ENCODE measurements at regions of chr5 and their contacts with region 1.

Region 1: DNA sequence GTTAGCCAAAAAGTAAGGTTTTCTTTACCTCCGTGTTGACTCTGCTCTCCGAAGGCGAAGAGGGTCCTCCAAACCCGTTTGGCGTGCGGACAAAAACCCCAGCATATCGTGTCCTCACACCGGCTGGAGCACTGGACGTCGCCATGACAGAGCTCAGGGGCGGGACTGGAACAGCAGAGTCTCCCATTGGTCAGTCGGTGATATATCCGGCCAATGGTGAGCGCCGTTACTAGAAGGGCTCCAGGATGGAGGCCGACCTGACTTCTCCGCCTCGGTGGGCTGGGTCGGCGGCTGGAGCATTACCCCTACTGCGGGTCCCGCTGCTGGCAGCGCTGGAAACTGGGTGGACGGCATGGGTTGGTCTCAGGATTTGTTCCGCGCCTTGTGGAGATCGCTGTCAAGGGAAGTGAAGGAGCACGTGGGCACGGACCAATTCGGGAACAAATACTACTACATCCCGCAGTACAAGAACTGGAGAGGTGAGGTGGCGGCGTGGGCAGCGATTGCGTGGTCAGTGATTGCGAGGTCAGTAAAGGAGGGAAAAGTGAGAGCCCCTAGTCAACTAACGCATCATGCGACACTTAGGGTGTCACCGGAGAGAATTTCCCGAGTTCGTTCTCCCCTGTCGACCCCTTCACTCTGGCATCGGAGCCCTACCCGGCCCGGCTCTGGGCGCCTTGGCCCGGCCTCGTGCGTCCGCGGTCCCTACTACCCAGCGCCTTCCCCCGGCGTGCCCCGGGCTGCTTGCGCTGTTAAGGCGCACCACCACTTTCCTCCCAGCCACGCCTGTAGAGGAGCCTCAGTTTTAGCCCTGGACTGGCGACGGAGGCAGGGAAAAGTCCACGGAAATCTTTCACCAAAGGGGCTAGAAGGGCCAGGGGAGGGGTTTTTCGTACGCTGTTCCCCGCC is at the starts of genes ERCC8 and NDUFAF2:
- DNase-seq: peak; percentile 96
- total RNA-seq, gene ERCC8: 9.4 to 12.2 TPM
- total RNA-seq, gene NDUFAF2: 28.3 to 45.0 TPM

Region 2: GRCh38 chr5:60649283-60649917 is 295.8 kb before region 1 on chr5:
- intact Hi-C with region 1: no loop called
- DNase-seq: no peak

Region 3: GRCh38 chr5:60916646-60917045 is 28.5 kb before region 1 on chr5:
- intact Hi-C with region 1: no loop called
- DNase-seq: no peak

Region 4: GRCh38 chr5:61082516-61083280 is 137.5 kb after region 1 on chr5:
- intact Hi-C with region 1: no loop called
- DNase-seq: no peak

Region 5: DNA sequence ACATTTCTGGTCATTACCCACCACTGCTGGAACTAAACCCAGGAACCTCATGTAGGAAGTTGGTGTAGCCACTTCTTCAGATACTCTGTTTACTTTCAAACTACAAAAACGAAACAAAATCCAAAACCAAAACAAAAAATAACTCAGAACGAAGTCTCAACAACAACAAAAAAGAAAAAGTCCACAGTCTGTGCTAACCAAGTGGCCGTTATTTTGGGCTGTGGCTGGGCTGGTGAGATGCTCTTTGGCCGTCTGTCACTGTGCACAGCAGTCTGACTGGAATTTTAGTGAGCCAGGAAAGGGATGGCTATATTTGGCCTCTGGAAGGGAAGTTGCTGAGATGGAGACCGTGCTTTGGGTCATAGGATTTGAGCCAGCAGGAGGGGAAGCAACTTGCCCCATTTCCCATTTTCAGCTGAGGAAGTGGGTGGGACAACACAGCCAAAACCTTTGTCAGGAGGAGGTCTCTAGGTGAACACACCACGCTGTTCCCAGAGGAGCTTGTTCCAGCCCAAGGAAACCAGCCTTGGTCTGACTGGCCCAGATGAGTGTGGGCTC is 721.0 kb after region 1 on chr5:
- intact Hi-C with region 1: loop called in 1 of 2 experiments (anchors 5 kb)
- DNase-seq: no peak